ENCODE measurements at regions of chr9 and their contacts with region 1.

Region 1: DNA sequence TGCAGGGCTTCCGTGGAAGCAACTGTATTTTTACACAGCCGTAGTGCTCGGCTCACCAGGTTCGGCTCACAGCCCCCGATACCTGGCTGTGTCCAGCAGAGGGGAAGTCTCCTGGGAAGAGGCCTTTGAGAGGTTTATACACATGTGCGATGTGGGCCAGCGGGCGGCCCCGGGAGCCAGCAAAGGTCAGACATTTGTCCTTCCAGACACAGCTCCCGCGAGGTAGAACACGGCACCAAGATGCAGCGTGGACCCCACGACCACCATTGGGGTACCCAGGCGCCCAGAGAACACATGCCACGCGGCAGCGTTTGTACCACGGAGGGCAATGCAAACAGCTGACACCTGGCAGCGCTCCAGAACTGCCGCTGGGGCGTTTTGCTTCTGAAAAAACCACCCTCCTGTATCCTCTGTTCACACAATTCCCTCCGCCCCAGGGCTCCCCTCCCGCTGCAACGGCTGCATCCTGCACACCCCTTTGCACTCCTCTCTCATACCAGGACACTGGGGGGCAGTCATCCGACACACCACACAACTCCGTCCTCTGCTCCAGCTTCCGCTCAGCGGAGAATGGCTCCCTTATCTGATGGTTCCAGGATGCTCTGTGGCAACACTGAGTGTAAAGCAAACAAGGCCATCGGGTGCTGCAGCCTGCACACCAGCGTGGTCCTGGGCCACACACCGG is 235.3 kb downstream of the SYK start:
- DNase-seq: peak; percentile 86
- H3K4me3 Mint-ChIP-seq: peak overlapping the region; percentile 7
- H3K27ac Mint-ChIP-seq: peak overlapping the region; percentile 42
- H3K4me1 Mint-ChIP-seq: peaks cover 48% of the 10 kb centered on the region
- H3K27me3 Mint-ChIP-seq: peaks cover 22% of the 10 kb centered on the region

Region 2: DNA sequence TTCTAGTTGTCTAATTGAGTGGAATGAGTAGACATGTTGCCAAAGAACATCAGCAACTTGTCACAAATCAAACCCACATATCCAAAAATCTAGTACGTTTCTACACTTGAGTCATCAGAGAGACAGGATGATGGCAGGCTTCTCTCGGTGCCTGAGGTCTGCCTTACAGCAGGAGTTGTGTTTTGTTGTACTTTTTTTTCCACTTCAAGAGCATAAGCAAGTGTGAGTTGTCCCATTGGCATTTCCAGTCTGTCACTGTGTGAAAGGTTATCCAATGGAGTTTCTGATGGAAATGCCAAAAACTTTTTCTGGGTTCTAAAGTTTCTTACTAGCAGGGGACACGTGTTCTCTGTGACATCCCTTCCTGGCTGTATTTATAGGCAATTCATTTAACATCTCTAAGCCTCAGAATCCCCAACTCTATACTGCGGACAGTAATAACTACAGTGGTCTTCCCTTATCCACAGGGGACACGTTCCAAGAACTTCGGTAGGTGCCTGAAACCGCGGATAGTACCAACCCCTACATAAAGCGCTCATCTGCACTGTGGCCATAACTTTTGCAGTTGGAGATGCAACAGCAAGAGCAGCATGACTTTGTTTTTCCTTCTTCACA is 11.1 kb after region 1 on chr9:
- CTCF ChIA-PET with region 1: interaction called, 3 read pairs
- POLR2A ChIA-PET with region 1: no interaction called
- intact Hi-C with region 1: loop called (anchors 1 kb)
- DNase-seq: peak; percentile 73
- H3K4me3 Mint-ChIP-seq: no peak overlapping the region
- H3K27ac Mint-ChIP-seq: peak overlapping the region; percentile 83
- H3K4me1 Mint-ChIP-seq: peaks cover 58% of the 10 kb centered on the region
- H3K27me3 Mint-ChIP-seq: peaks cover 40% of the 10 kb centered on the region

Region 3: DNA sequence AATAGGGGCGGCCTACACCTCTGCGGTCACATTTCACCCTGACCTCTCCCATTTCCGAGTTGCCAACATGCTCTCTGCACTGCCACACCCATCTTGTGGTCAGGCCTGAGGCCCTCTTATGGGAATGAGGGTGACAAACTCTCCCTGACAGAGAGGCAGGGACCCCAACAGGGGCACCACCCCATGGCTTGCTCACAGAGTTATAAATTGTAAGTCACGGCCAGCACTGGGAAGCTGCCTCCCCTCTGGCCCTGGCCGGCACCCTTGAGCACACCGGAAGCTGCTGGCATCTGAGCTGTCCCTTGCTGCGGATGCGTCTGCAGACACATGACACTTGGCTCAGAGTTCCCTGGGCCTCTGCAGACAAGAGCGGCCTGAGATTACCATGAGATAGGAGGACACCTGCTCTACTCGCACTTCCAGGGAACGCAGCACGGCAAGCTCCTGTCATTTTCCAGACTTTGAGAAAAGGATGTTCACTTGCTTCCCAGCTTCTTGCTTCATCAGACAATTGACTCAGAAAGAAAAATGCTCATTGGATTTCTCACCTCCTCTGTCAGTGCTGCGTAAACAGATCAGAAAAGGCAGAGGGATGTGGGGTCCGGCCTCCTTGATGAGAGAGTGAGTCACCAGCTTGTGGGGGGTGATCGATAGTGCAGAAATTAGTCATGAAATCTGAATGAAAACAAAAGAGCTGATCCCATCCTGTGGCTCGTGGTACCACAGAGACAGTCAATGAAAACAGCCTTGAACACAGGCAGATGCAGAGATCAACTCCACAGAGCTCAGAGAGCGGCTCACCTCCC is 34.4 kb after region 1 on chr9:
- CTCF ChIA-PET with region 1: interaction called, 5 read pairs
- POLR2A ChIA-PET with region 1: no interaction called
- intact Hi-C with region 1: loop called (anchors 5 kb)
- DNase-seq: peak; percentile 88
- H3K4me3 Mint-ChIP-seq: peak overlapping the region; percentile 9
- H3K27ac Mint-ChIP-seq: peak overlapping the region; percentile 85
- H3K4me1 Mint-ChIP-seq: peaks cover 18% of the 10 kb centered on the region
- H3K27me3 Mint-ChIP-seq: peaks cover 7% of the 10 kb centered on the region

Region 4: GRCh38 chr9:91106415-91107081 is 69.6 kb after region 1 on chr9:
- CTCF ChIA-PET with region 1: no interaction called
- POLR2A ChIA-PET with region 1: no interaction called
- intact Hi-C with region 1: no loop called
- DNase-seq: no peak
- H3K4me3 Mint-ChIP-seq: no peak overlapping the region
- H3K27ac Mint-ChIP-seq: no peak overlapping the region
- H3K4me1 Mint-ChIP-seq: peaks cover 30% of the 10 kb centered on the region
- H3K27me3 Mint-ChIP-seq: peaks cover 19% of the 10 kb centered on the region

Region 5: GRCh38 chr9:91253488-91253887 is 216.5 kb after region 1 on chr9:
- CTCF ChIA-PET with region 1: interaction called, 16 read pairs
- POLR2A ChIA-PET with region 1: no interaction called
- intact Hi-C with region 1: no loop called
- DNase-seq: no peak
- H3K4me3 Mint-ChIP-seq: no peak overlapping the region
- H3K27ac Mint-ChIP-seq: no peak overlapping the region
- H3K4me1 Mint-ChIP-seq: peaks cover 11% of the 10 kb centered on the region
- H3K27me3 Mint-ChIP-seq: no peaks in the 10 kb centered on the region

Region 6: DNA sequence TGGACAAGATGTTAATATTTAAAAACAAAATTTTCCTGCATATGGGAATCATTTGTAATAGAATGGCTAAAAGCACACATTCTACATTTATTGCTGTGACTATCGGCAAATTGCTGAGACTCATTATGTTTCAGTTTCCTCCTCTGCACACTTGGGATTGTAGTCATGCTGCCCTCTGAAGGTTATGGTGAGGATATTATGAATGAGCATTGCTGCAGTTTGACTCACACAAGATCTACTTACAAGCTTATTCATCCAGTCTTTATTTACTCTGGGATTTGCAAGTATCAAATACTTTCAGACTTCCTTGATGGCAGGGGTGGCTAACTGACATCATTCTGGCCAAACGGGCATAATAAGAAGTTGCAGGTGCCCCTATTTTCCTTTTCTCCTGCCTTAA is 396.2 kb after region 1 on chr9:
- CTCF ChIA-PET with region 1: interaction called, 16 read pairs
- POLR2A ChIA-PET with region 1: no interaction called
- intact Hi-C with region 1: loop called (anchors 1 kb)
- DNase-seq: no peak
- H3K4me3 Mint-ChIP-seq: no peak overlapping the region
- H3K27ac Mint-ChIP-seq: no peak overlapping the region
- H3K4me1 Mint-ChIP-seq: peaks cover 15% of the 10 kb centered on the region
- H3K27me3 Mint-ChIP-seq: peaks cover 14% of the 10 kb centered on the region

Region 7: GRCh38 chr9:91681461-91682305 is 644.7 kb after region 1 on chr9:
- CTCF ChIA-PET with region 1: interaction called, 3 read pairs
- POLR2A ChIA-PET with region 1: no interaction called
- intact Hi-C with region 1: loop called (anchors 2 kb)
- DNase-seq: peak; percentile 82
- H3K4me3 Mint-ChIP-seq: no peak overlapping the region
- H3K27ac Mint-ChIP-seq: no peak overlapping the region
- H3K4me1 Mint-ChIP-seq: peaks cover 5% of the 10 kb centered on the region
- H3K27me3 Mint-ChIP-seq: peaks cover 30% of the 10 kb centered on the region

Region 8: GRCh38 chr9:91727316-91727861 is 690.4 kb after region 1 on chr9:
- CTCF ChIA-PET with region 1: interaction called, 6 read pairs
- POLR2A ChIA-PET with region 1: no interaction called
- intact Hi-C with region 1: loop called (anchors 5 kb)
- DNase-seq: peak; percentile 48
- H3K4me3 Mint-ChIP-seq: no peak overlapping the region
- H3K27ac Mint-ChIP-seq: no peak overlapping the region
- H3K4me1 Mint-ChIP-seq: no peaks in the 10 kb centered on the region
- H3K27me3 Mint-ChIP-seq: peaks cover 3% of the 10 kb centered on the region

Measured in activated CD4-positive, alpha-beta memory T cell treated with anti-CD3 and anti-CD28 coated beads for 36 hours (primary cell).